Colonic mucosa (tissue), 4 donors: ENCODE measurements at regions of chr2 and their contacts with region 1.

Region 1: DNA sequence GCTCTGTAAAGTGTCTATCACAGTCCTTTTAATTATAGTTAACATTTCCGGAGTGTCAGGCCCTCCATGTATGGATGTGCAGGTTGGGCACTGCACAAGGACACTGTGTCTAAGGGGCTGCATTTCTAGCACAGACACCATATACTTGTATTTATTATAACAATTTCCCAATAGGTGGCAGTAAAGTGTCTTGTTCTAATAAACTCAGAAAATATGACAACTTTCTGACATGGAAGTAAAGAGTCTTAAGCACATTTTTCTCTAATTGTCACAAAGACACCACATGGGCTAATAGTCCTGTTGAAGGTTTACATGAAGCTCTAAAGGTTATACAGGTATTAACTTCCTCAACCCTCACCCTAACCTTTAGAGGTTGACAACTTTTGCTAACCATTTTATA is 156.6 kb downstream of the DYSF start:
- DNase-seq: peak; percentile 2
- H3K4me3 ChIP-seq: no peak overlapping the region
- H3K27ac ChIP-seq: no peak overlapping the region
- H3K4me1 ChIP-seq: no peaks in the 10 kb centered on the region
- H3K27me3 ChIP-seq: no peaks in the 10 kb centered on the region
- CTCF ChIP-seq: no peak

Region 2: DNA sequence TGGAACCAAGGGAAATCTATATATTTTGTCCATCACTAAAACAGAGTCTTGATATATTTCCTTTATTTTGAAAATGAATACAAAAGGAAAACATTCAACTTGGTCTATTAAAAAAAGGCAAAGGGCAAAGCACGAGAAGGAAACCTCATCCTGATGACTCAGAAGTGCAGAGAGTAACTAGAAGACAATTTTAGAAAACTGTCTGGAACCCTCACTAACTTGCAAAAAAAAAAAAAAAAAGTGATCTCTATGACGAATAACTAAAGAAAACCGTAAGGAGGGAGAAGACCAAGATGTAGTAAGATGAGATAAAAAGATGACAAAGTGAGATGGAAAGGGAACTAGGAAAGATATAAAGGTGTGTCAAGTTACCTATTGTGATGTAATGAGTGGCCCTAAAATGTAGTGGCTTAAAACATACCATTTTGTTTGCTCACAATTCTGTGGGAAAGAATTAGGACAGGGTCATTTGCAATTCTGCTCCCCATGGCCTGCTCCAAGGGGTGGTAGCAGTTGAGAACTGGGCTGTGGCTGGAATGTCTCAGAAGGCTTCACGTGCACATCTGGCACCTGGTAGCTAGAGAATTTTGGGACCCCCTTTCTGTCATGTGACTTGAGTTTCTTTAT is 146.4 kb after region 1 on chr2:
- intact Hi-C with region 1: no loop called
- DNase-seq: no peak
- H3K4me3 ChIP-seq: no peak overlapping the region
- H3K27ac ChIP-seq: no peak overlapping the region
- H3K4me1 ChIP-seq: no peaks in the 10 kb centered on the region
- H3K27me3 ChIP-seq: no peaks in the 10 kb centered on the region
- CTCF ChIP-seq: no peak

Region 3: GRCh38 chr2:71807975-71808451 is 198.1 kb after region 1 on chr2:
- intact Hi-C with region 1: loop called (anchors 5 kb)
- DNase-seq: peak; percentile 30
- H3K4me3 ChIP-seq: no peak overlapping the region
- H3K27ac ChIP-seq: no peak overlapping the region
- H3K4me1 ChIP-seq: no peaks in the 10 kb centered on the region
- H3K27me3 ChIP-seq: no peaks in the 10 kb centered on the region
- CTCF ChIP-seq: no peak

Region 4: GRCh38 chr2:72115552-72116546 is 505.9 kb after region 1 on chr2:
- intact Hi-C with region 1: no loop called
- DNase-seq: peak; percentile 17
- H3K4me3 ChIP-seq: no peak overlapping the region
- H3K27ac ChIP-seq: no peak overlapping the region
- H3K4me1 ChIP-seq: no peaks in the 10 kb centered on the region
- H3K27me3 ChIP-seq: no peaks in the 10 kb centered on the region
- CTCF ChIP-seq: no peak